K562 (cell line): ENCODE measurements at regions of chr4 and their contacts with region 1.

Region 1: DNA sequence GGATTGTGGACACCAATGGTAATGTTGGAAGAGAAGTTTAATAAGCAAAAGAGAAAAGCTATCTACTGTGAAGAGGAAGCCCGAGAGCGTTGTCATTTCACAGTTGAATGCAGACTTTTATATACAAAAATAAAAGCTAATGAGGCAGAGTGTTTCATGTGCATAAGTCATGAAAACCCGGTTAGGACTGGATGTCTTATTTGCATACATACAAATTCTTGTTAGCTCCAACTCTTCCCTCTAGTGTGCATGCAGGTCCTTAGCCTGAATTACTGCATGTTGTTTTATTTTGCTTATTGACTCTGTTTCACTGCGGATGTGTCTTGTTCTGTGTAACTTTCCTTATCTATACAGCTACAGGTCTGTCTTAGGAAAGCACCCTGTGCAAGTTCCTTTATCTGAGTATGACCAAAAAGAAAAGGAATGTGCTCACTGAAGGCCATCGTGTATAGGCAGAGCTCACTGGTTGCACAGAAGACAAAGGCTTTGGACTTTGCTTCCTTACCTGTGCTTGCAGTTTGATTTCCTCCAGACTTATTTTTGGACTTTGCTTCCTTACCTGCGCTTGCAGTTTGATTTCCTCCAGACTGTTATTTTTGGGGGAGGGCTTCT is 25.1 kb upstream of the UGT2B11 start:
- DNase-seq: peak in 2 of 4 experiments; percentile 2 to 44
- ATAC-seq: peak; percentile 64
- H3K4me3 ChIP-seq: no peak overlapping the region
- H3K27ac ChIP-seq: peak overlapping the region; percentile 48; the same call in 1 of the 3 replicates
- H3K4me1 ChIP-seq: no peaks in the 10 kb centered on the region
- H3K27me3 ChIP-seq: no peaks in the 10 kb centered on the region
- CTCF ChIP-seq: no peak
- EP300 ChIP-seq: peak; percentile 57; the same call in 1 of the 2 replicates
- POLR2A ChIP-seq: no peak
- RAD21 ChIP-seq: peak; percentile 45 to 46

Region 2: DNA sequence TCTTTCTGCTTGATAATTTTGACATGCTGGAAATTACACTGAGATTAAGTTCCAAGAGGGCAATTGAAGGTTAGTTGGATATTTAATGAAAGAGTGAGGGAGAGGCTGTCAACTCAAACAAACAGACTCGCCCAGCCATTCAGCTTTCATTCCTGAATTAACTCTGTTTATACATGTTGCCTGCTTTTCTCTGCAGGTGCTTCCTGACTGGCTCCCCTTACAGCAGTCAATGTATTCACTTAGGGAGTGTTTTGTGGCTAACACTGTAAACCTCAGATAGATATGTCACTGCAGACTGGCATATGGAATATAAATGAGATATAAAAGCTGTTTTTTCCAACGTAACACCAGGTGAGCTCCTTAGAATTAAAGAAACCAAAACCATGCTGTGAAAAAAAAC is 1305.0 kb before region 1 on chr4:
- CTCF ChIA-PET with region 1: no interaction called
- POLR2A ChIA-PET with region 1: no interaction called
- in situ Hi-C with region 1: no loop called
- intact Hi-C with region 1: no loop called
- DNase-seq: no peak
- ATAC-seq: no peak
- H3K4me3 ChIP-seq: no peak overlapping the region
- H3K27ac ChIP-seq: no peak overlapping the region
- H3K4me1 ChIP-seq: no peaks in the 10 kb centered on the region
- H3K27me3 ChIP-seq: no peaks in the 10 kb centered on the region
- CTCF ChIP-seq: no peak
- EP300 ChIP-seq: no peak
- POLR2A ChIP-seq: no peak
- RAD21 ChIP-seq: no peak

Region 3: GRCh38 chr4:69167300-69167699 is 72.4 kb before region 1 on chr4:
- CTCF ChIA-PET with region 1: no interaction called
- POLR2A ChIA-PET with region 1: no interaction called
- in situ Hi-C with region 1: no loop called
- intact Hi-C with region 1: loop called (anchors 10 kb)
- DNase-seq: no peak
- ATAC-seq: no peak
- H3K4me3 ChIP-seq: no peak overlapping the region
- H3K27ac ChIP-seq: no peak overlapping the region
- H3K4me1 ChIP-seq: no peaks in the 10 kb centered on the region
- H3K27me3 ChIP-seq: no peaks in the 10 kb centered on the region
- CTCF ChIP-seq: no peak
- EP300 ChIP-seq: no peak
- POLR2A ChIP-seq: no peak
- RAD21 ChIP-seq: no peak

Region 4: DNA sequence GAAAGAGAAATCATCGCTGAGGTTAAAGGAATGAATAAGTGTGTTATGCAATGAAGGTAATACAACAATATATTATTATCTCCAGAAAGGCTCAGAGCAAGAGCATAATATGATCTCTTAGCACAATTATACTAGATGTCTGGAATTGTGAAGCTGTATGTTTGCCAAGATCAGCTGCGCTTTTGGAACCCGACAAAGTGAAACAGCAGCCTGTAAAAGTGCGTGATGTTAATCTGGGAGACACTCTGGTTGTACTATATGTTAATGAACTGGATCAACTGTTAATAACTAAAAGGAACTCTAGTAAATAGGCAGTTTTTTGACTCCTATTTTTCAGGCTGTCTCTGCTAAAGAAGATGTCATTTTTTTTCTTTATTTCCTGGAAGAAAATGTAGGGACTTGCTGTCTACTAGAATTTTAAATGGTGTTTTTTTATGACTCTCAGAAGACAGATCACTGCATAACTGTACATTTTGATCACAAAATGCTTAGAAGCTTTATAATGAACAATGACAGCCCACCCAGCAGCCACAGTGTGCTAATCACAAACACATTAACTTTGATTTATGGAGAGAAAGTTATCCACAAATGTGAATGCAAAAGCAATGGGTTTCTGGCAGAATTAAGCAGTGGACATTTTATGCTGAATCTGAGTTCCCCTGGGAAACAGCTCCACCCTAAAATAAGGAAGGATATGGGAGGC is 90.8 kb after region 1 on chr4:
- CTCF ChIA-PET with region 1: no interaction called
- POLR2A ChIA-PET with region 1: no interaction called
- in situ Hi-C with region 1: no loop called
- intact Hi-C with region 1: no loop called
- DNase-seq: no peak
- ATAC-seq: no peak
- H3K4me3 ChIP-seq: no peak overlapping the region
- H3K27ac ChIP-seq: no peak overlapping the region
- H3K4me1 ChIP-seq: no peaks in the 10 kb centered on the region
- H3K27me3 ChIP-seq: no peaks in the 10 kb centered on the region
- CTCF ChIP-seq: no peak
- EP300 ChIP-seq: no peak
- POLR2A ChIP-seq: no peak
- RAD21 ChIP-seq: no peak